OCI-LY7 (cell line): ENCODE measurements at regions of chr6 and their contacts with region 1.

Region 1: DNA sequence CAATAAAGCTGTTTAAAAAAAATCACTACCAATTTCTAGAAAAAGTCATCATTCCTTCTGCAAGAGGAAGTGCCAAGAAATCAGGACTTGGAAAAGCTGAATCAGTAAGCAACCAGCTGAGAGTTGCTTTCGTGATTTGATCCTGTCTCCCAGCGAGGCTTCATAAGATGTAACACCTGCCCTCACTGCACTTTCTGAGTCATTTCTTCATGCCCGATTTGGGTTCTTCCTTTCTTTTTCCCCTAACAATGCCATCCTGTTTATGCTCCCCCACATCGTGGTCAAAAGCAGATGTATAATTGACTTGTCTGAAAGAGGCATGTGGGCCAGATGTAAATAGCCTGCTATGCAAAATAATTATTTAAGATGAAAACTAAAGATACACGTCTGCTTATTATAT is 52.1 kb downstream of the RIPOR2 start:
- DNase-seq: peak; percentile 85
- H3K4me3 ChIP-seq: peak overlapping the region; percentile 46
- H3K27ac ChIP-seq: peak overlapping the region; percentile 83
- H3K4me1 ChIP-seq: peaks cover 94% of the 10 kb centered on the region
- CTCF ChIP-seq: no peak

Region 2: GRCh38 chr6:24340998-24341938 is 542.4 kb before region 1 on chr6:
- CTCF ChIA-PET with region 1: no interaction called
- POLR2A ChIA-PET with region 1: no interaction called
- intact Hi-C with region 1: no loop called
- DNase-seq: no peak
- H3K4me3 ChIP-seq: no peak overlapping the region
- H3K27ac ChIP-seq: no peak overlapping the region
- H3K4me1 ChIP-seq: no peaks in the 10 kb centered on the region
- CTCF ChIP-seq: no peak

Region 3: DNA sequence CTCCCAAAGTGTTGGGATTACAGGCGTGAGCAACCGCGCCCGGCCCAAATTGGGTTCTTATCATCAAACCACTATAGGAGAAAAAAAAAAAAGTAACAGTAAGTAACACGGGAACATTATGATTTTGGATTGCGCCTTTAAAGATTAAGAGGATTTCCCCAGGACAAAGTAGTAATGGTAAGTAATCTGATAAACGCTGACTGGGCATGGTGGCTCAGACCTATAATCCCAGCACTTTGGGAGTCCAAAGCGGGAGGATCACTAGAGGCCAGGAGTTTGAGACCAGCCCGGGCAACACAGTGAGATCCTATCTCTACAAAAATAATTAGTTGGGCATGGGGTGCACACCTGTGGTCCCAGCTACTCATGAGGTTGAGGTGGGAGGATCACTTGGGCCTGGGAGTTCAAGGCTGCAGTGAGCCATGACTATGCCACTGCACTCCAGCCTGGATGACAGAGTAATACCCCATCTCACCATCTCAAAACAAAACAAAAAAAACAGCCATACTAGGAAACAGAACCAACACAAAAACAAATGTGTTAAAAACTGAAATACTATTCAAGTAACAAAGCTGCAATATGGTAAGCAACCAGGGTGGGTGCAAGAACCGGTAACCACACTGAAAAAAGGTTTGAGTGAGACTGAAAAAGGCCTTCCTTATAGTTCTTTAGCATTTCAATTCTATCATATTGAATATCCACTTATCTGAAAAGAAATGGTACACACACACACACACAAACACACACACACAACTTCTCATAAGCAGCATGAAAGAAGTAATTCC is 172.9 kb before region 1 on chr6:
- CTCF ChIA-PET with region 1: no interaction called
- POLR2A ChIA-PET with region 1: no interaction called
- intact Hi-C with region 1: no loop called
- DNase-seq: no peak
- H3K4me3 ChIP-seq: no peak overlapping the region
- H3K27ac ChIP-seq: no peak overlapping the region
- H3K4me1 ChIP-seq: no peaks in the 10 kb centered on the region
- CTCF ChIP-seq: no peak

Region 4: GRCh38 chr6:24861934-24862333 is 21.7 kb before region 1 on chr6:
- CTCF ChIA-PET with region 1: interaction called, 4 read pairs
- POLR2A ChIA-PET with region 1: interaction called, 20 read pairs
- intact Hi-C with region 1: loop called (anchors 2 kb)
- DNase-seq: peak; percentile 88
- H3K4me3 ChIP-seq: peak overlapping the region; percentile 15
- H3K27ac ChIP-seq: peak overlapping the region; percentile 82
- H3K4me1 ChIP-seq: peaks cover 99% of the 10 kb centered on the region
- CTCF ChIP-seq: no peak

Region 5: GRCh38 chr6:24902782-24903181 is 19.2 kb after region 1 on chr6:
- CTCF ChIA-PET with region 1: interaction called, 4 read pairs
- POLR2A ChIA-PET with region 1: interaction called, 54 read pairs
- intact Hi-C with region 1: no loop called
- DNase-seq: no peak
- H3K4me3 ChIP-seq: no peak overlapping the region
- H3K27ac ChIP-seq: peak overlapping the region; percentile 64
- H3K4me1 ChIP-seq: peaks cover 79% of the 10 kb centered on the region
- CTCF ChIP-seq: no peak

Region 6: GRCh38 chr6:24910961-24911712 is 27.5 kb after region 1 on chr6:
- CTCF ChIA-PET with region 1: interaction called, 11 read pairs
- POLR2A ChIA-PET with region 1: interaction called, 22 read pairs
- intact Hi-C with region 1: no loop called
- DNase-seq: peak; percentile 62
- H3K4me3 ChIP-seq: peak overlapping the region; percentile 75
- H3K27ac ChIP-seq: peak overlapping the region; percentile 95
- H3K4me1 ChIP-seq: peaks cover 75% of the 10 kb centered on the region
- CTCF ChIP-seq: no peak

Region 7: GRCh38 chr6:24919004-24919892 is 35.6 kb after region 1 on chr6:
- CTCF ChIA-PET with region 1: interaction called, 4 read pairs
- POLR2A ChIA-PET with region 1: interaction called, 10 read pairs
- intact Hi-C with region 1: loop called (anchors 2 kb)
- DNase-seq: peak; percentile 96
- H3K4me3 ChIP-seq: peak overlapping the region; percentile 61
- H3K27ac ChIP-seq: peak overlapping the region; percentile 88
- H3K4me1 ChIP-seq: peaks cover 66% of the 10 kb centered on the region
- CTCF ChIP-seq: no peak; the same call in 1 of the 2 replicates